Endothelial cell of umbilical vein (primary cell): ENCODE measurements at regions of chr10 and their contacts with region 1.

Region 1: DNA sequence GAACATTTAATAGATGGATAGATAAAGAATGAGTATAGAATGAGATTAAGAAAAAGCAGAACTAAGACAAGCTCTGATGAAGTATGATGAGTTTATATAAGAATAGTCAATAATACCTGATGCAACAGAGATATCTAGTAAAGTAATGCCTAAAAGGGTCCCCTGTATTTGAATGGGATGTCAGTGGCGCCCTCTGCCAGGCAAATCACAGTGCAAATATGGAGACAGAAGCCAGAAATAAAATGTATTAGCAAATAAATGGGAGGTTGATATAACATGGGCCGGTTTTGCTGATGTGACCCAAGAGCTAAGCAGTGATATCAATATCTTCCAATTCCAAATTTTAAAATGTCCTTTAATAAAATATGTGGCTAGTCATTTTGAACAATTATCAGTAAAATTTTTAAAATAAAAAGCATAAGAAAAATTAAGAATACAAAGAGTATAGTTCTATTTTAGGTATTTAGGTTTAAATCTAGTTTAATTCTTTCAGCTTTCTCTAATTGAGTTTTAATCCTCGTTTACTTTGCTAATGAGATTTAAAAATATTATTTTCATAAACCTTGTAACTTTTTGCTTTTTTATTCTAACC is 62.6 kb downstream of the ADK start:
- DNase-seq: peak; percentile 67
- H3K4me3 ChIP-seq: no peak overlapping the region
- H3K27ac ChIP-seq: no peak overlapping the region
- H3K4me1 ChIP-seq: no peaks in the 10 kb centered on the region
- H3K27me3 ChIP-seq: no peaks in the 10 kb centered on the region
- CTCF ChIP-seq: peak; percentile 43 to 50
- POLR2A ChIP-seq: no peak

Region 2: GRCh38 chr10:74151056-74151878 is 62.4 kb before region 1 on chr10 and contains the start of gene ADK:
- CTCF ChIA-PET with region 1: interaction called, 19 read pairs
- POLR2A ChIA-PET with region 1: no interaction called
- dilution Hi-C with region 1: no loop called
- intact Hi-C with region 1: loop called (anchors 2 kb)
- DNase-seq: peak; percentile 99
- H3K4me3 ChIP-seq: peak within 1 kb of the TSS; percentile 82 to 96 (median 87)
- H3K27ac ChIP-seq: peak within 1 kb of the TSS; percentile 93
- H3K4me1 ChIP-seq: peaks cover 13% of the 10 kb centered on the region
- H3K27me3 ChIP-seq: no peaks in the 10 kb centered on the region
- CTCF ChIP-seq: peak in 1 of 2 donors; percentile 18
- POLR2A ChIP-seq: peak; percentile 82
- total RNA-seq, gene ADK: 38.1 and 46.5 TPM in 2 replicates

Region 3: GRCh38 chr10:74176380-74177139 is 37.1 kb before region 1 on chr10:
- CTCF ChIA-PET with region 1: interaction called, 10 read pairs
- POLR2A ChIA-PET with region 1: no interaction called
- dilution Hi-C with region 1: no loop called
- intact Hi-C with region 1: loop called (anchors 2 kb)
- DNase-seq: peak; percentile 95
- H3K4me3 ChIP-seq: peak overlapping the region; percentile 32 to 80 (median 39)
- H3K27ac ChIP-seq: peak overlapping the region; percentile 41
- H3K4me1 ChIP-seq: peaks cover 15% of the 10 kb centered on the region
- H3K27me3 ChIP-seq: no peaks in the 10 kb centered on the region
- CTCF ChIP-seq: no peak
- POLR2A ChIP-seq: peak; percentile 91

Region 4: DNA sequence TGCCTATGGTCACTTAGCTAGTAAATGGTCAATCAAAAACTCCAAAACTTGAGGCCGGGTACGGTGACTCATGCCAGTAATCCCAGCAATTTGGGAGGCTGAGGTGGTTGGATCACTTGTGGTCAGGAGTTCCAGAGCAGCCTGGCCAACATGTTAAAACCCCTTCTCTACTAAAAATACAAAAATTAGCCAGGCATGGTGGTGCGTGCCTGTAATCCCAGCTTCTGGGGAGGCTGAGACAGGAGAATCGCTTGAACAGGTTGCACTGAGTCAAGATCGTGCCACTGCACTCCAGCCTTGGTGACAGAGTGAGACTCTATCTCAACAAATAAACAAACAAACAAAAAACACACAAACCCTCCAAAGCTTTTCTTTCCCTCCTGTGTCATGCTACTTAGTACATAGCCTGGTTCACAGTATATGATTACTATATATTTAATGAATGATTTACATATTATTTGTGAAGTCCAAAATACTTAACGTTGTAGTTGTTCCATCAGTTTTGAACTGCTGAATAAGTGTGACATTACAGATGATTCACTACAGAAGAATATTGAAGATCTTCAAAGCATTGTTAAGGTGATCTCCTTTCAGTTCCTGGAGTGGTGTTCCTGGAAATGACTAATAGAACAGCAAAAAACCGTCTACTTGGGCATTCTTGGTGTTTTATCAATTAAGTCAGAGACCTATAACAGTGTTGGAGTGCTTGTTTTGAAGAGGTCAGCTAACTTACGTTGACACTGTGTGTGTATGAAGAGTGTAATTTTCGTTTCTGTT is 10.3 kb after region 1 on chr10:
- CTCF ChIA-PET with region 1: interaction called, 18 read pairs
- POLR2A ChIA-PET with region 1: no interaction called
- dilution Hi-C with region 1: no loop called
- intact Hi-C with region 1: no loop called
- DNase-seq: peak; percentile 79
- H3K4me3 ChIP-seq: peak overlapping the region in 1 of 3 experiments; percentile 63
- H3K27ac ChIP-seq: peak overlapping the region; percentile 61
- H3K4me1 ChIP-seq: peaks cover 49% of the 10 kb centered on the region
- H3K27me3 ChIP-seq: no peaks in the 10 kb centered on the region
- CTCF ChIP-seq: no peak
- POLR2A ChIP-seq: no peak